Tibial artery (tissue), 4 donors: ENCODE measurements at regions of chr20 and their contacts with region 1.

Region 1: GRCh38 chr20:12058216-12058615 is 140.5 kb downstream of the BTBD3 start:
- DNase-seq: no peak
- H3K4me3 ChIP-seq: no peak overlapping the region
- H3K27ac ChIP-seq: no peak overlapping the region
- H3K4me1 ChIP-seq: no peaks in the 10 kb centered on the region
- H3K27me3 ChIP-seq: no peaks in the 10 kb centered on the region
- CTCF ChIP-seq: no peak

Region 2: DNA sequence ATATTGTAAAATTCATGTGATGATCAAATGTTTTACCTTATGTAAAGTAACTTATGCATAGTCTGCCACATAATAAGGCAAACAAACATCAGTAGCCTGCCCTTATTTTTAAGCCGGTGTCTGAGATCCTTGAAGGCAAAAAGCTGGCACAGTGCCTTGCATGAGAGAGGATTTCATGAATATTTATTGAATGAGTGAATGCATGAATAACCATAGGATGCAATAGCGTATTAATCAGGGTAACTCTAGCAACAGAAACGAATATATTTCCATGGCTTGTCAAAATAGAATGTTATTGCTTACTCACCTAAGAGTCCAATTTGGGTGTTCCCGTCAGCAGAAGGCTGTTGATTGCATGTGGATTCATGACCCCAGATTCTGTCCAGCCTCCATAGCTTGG is 105.6 kb before region 1 on chr20:
- intact Hi-C with region 1: no loop called
- DNase-seq: no peak
- H3K4me3 ChIP-seq: no peak overlapping the region
- H3K27ac ChIP-seq: no peak overlapping the region
- H3K4me1 ChIP-seq: no peaks in the 10 kb centered on the region
- H3K27me3 ChIP-seq: no peaks in the 10 kb centered on the region
- CTCF ChIP-seq: no peak

Region 3: GRCh38 chr20:12255461-12255970 is 197.3 kb after region 1 on chr20:
- intact Hi-C with region 1: no loop called
- DNase-seq: no peak
- H3K4me3 ChIP-seq: no peak overlapping the region
- H3K27ac ChIP-seq: no peak overlapping the region
- H3K4me1 ChIP-seq: no peaks in the 10 kb centered on the region
- H3K27me3 ChIP-seq: no peaks in the 10 kb centered on the region
- CTCF ChIP-seq: no peak

Region 4: GRCh38 chr20:12287575-12287974 is 229.4 kb after region 1 on chr20:
- intact Hi-C with region 1: no loop called
- DNase-seq: no peak
- H3K4me3 ChIP-seq: no peak overlapping the region
- H3K27ac ChIP-seq: no peak overlapping the region
- H3K4me1 ChIP-seq: no peaks in the 10 kb centered on the region
- H3K27me3 ChIP-seq: no peaks in the 10 kb centered on the region
- CTCF ChIP-seq: no peak

Region 5: DNA sequence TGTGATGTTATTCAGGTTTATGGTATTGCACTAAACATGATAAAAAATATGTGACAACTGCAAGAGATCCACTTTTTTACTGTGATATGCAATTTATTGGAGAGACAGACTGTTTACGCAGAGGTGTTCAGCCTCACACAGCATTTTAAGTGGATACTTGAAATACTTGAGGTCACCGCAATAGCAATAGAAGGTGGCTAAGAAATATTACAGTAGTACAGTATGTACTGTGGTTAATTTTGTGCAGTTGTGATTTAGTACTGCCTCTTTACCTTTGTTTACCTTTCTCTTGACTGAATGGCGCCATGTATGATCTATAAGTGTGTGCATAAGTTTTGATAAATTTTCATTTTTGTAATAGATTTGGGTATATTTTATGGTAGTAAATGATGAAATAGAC is 1954.5 kb after region 1 on chr20:
- intact Hi-C with region 1: loop called (anchors 5 kb)
- DNase-seq: no peak
- H3K4me3 ChIP-seq: no peak overlapping the region
- H3K27ac ChIP-seq: no peak overlapping the region
- H3K4me1 ChIP-seq: no peaks in the 10 kb centered on the region
- H3K27me3 ChIP-seq: no peaks in the 10 kb centered on the region
- CTCF ChIP-seq: no peak